CD14-positive monocyte (primary cell): ENCODE measurements at regions of chr1 and their contacts with region 1.

Region 1: DNA sequence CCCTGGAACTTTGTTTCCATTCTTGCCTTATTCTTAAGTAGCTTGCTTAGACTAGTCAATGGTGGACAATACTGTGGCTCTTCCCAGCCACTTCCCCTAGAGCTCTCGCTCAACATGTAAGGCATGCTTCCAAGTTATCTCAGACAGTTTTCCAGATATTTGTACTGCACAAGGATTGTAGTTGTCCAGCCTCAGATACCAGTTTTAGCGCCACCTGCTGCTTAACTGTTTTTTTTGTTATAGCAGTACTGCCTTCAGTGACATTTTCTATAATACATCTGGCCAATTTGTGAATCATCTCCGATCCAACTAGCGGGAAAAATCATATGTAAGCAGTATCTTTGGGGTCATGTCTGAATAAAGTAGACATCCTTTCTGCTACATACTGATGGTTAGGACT is 346.7 kb upstream of the ADGRL4 start:
- DNase-seq: no peak
- H3K4me3 ChIP-seq: no peak overlapping the region
- H3K4me3 Mint-ChIP-seq: no peak overlapping the region
- H3K27ac ChIP-seq: no peak overlapping the region
- H3K27ac Mint-ChIP-seq: no peak overlapping the region
- H3K4me1 ChIP-seq: no peaks in the 10 kb centered on the region
- H3K4me1 Mint-ChIP-seq: no peaks in the 10 kb centered on the region
- H3K27me3 ChIP-seq: no peaks in the 10 kb centered on the region
- H3K27me3 Mint-ChIP-seq: no peaks in the 10 kb centered on the region
- CTCF ChIP-seq: no peak

Region 2: DNA sequence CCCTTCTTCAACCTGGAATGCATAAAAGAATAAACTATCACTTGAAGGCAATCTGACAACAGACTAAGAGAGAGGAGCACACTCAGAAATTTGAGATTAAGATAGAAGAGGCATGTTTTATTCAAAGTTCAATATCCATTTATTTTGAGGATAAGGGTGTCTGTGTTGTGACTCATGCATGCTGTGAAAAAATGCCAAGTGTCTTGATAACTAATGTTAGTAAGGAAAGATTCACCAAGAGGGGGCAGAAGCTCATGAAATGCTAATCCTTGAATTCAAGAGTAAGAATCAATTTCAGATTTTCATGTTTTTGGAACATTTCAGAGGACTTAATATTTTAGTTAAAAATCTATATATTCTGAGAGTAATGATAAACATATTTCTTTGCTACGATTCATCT is 609.6 kb before region 1 on chr1:
- intact Hi-C with region 1: no loop called
- DNase-seq: no peak
- H3K4me3 ChIP-seq: no peak overlapping the region
- H3K4me3 Mint-ChIP-seq: no peak overlapping the region
- H3K27ac ChIP-seq: no peak overlapping the region
- H3K27ac Mint-ChIP-seq: no peak overlapping the region
- H3K4me1 ChIP-seq: no peaks in the 10 kb centered on the region
- H3K4me1 Mint-ChIP-seq: no peaks in the 10 kb centered on the region
- H3K27me3 ChIP-seq: no peaks in the 10 kb centered on the region
- H3K27me3 Mint-ChIP-seq: no peaks in the 10 kb centered on the region
- CTCF ChIP-seq: no peak

Region 3: GRCh38 chr1:78839704-78840277 is 513.4 kb before region 1 on chr1:
- intact Hi-C with region 1: loop called in 1 of 2 experiments (anchors 5 kb)
- DNase-seq: peak in 2 of 3 donors; percentile 7 to 11
- H3K4me3 ChIP-seq: no peak overlapping the region
- H3K4me3 Mint-ChIP-seq: no peak overlapping the region
- H3K27ac ChIP-seq: no peak overlapping the region
- H3K27ac Mint-ChIP-seq: no peak overlapping the region
- H3K4me1 ChIP-seq: no peaks in the 10 kb centered on the region
- H3K4me1 Mint-ChIP-seq: peaks cover 6% of the 10 kb centered on the region
- H3K27me3 ChIP-seq: no peaks in the 10 kb centered on the region
- H3K27me3 Mint-ChIP-seq: no peaks in the 10 kb centered on the region
- CTCF ChIP-seq: peak; percentile 69